Heart left ventricle (tissue), 16 donors: ENCODE measurements at regions of chr4 and their contacts with region 1.

Region 1: DNA sequence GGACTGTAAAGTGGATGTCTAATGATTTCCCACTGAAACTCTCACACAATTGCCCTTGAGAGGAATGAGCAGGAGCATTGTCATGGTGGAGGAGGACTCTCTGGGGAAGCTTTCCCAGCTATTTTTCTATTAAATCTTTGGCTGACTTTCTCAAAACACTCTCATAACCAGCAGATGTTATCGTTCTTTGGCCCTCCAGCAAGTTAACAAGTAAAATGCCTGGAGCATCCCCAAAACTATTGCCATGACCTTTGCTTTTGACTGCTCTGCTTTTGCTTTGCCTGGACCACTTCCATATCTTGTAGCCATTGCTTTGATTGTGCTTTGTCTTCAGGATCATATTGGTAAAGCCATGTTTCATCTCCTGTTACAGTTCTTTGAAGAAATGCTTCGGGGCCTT is 120.2 kb upstream of the PDE5A start:
- DNase-seq: no peak
- ATAC-seq: peak in 2 of 4 donors; percentile 35 to 39
- H3K4me3 ChIP-seq: no peak overlapping the region
- H3K27ac ChIP-seq: peak overlapping the region in 5 of 12 donors; percentile 2 to 42 (median 16)
- H3K4me1 ChIP-seq: peaks cover 0 to 36% (median 1%) of the 10 kb centered on the region in 12 donors
- H3K27me3 ChIP-seq: no peaks in the 10 kb centered on the region
- CTCF ChIP-seq: no peak
- POLR2A ChIP-seq: no peak

Region 2: GRCh38 chr4:119300101-119300978 is 448.5 kb before region 1 on chr4:
- intact Hi-C with region 1: loop called in 1 of 10 experiments (anchors 10 kb)
- DNase-seq: peak; percentile 94 to 98 (median 96)
- ATAC-seq: peak; percentile 93 to 98 (median 97)
- H3K4me3 ChIP-seq: peak overlapping the region; percentile 63 to 93 (median 78)
- H3K27ac ChIP-seq: peak overlapping the region; percentile 81 to 98 (median 93)
- H3K4me1 ChIP-seq: peaks cover 6 to 41% (median 25%) of the 10 kb centered on the region in 12 donors
- H3K27me3 ChIP-seq: no peaks in the 10 kb centered on the region
- CTCF ChIP-seq: peak in 2 of 12 donors; percentile 8 to 18
- POLR2A ChIP-seq: peak in 1 of 2 donors; percentile 71

Region 3: GRCh38 chr4:119589165-119589564 is 159.7 kb before region 1 on chr4:
- intact Hi-C with region 1: no loop called
- DNase-seq: no peak
- ATAC-seq: peak in 3 of 4 donors; percentile 52 to 66 (median 66)
- H3K4me3 ChIP-seq: no peak overlapping the region
- H3K27ac ChIP-seq: peak overlapping the region in 1 of 12 donors; percentile 49
- H3K4me1 ChIP-seq: peaks cover 0 to 16% (median 2%) of the 10 kb centered on the region in 12 donors
- H3K27me3 ChIP-seq: no peaks in the 10 kb centered on the region
- CTCF ChIP-seq: no peak
- POLR2A ChIP-seq: no peak

Region 4: DNA sequence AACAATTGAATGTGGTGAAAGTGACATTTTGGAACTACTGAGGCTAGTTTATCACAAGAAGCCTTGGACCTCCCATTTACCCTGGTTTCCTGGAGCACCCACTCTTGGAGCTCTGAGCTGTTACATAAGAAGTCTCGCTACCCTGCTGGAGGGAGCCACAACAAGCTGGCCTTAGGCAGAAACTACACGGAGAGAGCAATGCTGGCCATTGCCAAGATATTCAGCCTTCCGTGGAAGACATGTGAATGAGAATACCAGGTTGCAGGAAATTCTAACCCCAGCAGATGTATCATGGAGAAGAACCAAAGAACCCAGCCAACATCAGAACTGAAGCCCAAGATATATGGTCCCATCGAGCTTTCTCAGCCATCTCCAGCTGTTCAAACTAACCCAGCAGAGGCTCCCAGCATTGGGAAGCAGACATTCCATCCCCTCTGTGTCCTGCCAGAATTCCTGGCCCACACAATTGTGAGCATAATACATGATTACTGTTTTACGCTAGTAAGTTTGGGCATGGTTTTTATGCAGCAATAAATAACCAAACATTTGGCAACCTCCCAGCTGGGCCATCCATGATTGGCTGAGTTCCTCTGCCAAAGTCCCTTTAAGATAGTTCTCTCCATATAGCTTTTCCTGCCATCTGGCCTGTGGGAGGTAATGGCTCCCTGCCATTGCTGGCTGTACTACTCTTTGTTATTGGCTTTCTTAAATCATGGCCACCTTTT is 102.3 kb before region 1 on chr4:
- intact Hi-C with region 1: loop called in 1 of 10 experiments (anchors 10 kb)
- DNase-seq: peak in 4 of 5 donors; percentile 34 to 59 (median 50)
- ATAC-seq: peak; percentile 68 to 90 (median 90)
- H3K4me3 ChIP-seq: no peak overlapping the region
- H3K27ac ChIP-seq: peak overlapping the region in 6 of 12 donors; percentile 25 to 79 (median 47)
- H3K4me1 ChIP-seq: peaks cover 0 to 14% (median 0%) of the 10 kb centered on the region in 12 donors
- H3K27me3 ChIP-seq: no peaks in the 10 kb centered on the region
- CTCF ChIP-seq: no peak
- POLR2A ChIP-seq: no peak